ENCODE measurements at regions of chr20 and their contacts with region 1.

Region 1: DNA sequence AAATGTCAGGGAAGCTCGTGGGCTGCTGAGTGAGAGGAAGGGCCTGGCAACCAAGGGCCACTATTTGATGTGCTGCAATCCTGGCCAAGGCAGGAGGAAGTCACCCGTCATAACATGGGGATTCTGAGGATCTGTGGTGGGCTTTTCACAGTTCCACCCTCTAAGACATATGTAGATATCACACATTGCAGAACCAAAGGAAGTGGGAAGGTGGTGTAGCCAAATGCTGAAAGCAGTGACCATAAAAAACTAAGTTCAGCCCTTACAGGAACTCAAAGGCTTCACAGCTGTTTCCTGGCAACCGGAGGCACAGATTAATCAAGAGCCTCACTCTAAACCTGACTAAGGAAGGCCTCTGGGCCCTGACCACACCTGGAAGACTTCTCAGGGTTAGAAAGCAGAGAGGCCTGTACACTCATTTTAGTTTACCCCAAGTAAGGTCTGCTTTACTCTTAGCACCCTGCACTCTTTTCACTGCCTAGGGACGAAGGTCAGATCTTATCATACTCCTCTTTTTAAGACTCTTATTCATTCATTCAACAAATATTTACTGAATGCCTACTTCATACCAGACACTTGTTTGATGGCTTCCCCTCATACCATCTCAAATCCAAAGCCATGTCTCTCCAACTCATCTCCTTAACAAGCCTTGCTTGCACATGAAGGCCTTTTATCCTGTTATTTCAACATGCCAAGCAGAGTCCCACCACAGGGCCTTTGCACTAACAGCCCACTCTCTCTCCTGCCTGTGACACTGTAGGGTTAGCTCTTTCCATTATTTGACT is 2.6 kb downstream of the UBE2V1 start:
- H3K4me3 ChIP-seq: no peak overlapping the region
- H3K27ac ChIP-seq: no peak overlapping the region
- H3K4me1 ChIP-seq: peaks cover 7% of the 10 kb centered on the region; the same call in 1 of the 2 replicates
- CTCF ChIP-seq: no peak

Region 2: DNA sequence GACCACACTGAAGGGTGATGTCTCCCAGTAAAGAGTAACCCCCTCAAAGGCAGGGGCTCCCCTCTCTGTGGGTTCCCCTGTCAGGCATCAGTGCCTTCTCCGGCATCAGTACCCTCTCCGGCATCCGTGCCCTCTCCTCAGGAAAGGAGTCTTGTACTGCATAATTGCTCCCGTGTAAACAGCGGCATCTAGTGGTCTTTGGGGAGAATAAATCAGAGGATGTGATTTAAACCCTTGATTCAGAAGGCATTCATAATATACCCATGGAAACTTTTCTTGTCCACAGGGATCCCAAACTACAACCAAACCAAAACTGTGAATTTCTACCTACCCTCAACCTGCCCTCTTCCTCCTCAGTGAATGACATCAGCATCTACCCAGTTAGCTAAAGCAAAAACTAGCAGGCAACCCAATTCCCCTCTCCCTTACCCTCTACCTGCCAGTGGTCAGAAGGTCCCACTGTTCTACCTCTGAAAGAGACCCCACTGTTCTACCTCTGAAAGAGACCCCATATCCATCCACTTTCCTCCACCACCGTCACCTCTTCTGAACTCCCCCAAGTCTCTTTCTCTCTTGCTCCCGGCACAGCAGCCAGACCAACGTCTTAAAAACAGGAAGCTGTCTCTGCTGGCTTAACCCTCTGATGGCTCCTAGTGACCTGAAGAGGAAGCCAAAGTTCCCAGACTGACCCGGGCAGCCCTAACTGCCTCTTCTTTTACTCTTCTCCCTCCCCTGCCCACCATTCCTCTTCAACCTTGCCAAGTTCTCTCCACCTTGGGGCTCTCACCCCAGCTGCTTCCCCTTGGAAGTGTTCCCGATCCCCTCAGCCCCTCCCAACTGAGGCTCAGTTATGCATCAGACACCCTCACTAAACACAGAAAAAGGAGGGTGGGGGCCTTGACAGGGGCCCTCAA is 24.6 kb before region 1 on chr20:
- CTCF ChIA-PET with region 1: interaction called, 13 read pairs
- POLR2A ChIA-PET with region 1: no interaction called
- H3K4me3 ChIP-seq: no peak overlapping the region
- H3K27ac ChIP-seq: no peak overlapping the region
- H3K4me1 ChIP-seq: peaks cover 8% of the 10 kb centered on the region
- CTCF ChIP-seq: peak; percentile 79